Activated CD4-positive, alpha-beta memory T cell treated with anti-CD3 and anti-CD28 coated beads for 36 hours (primary cell): ENCODE measurements at regions of chr9 and their contacts with region 1.

Region 1: DNA sequence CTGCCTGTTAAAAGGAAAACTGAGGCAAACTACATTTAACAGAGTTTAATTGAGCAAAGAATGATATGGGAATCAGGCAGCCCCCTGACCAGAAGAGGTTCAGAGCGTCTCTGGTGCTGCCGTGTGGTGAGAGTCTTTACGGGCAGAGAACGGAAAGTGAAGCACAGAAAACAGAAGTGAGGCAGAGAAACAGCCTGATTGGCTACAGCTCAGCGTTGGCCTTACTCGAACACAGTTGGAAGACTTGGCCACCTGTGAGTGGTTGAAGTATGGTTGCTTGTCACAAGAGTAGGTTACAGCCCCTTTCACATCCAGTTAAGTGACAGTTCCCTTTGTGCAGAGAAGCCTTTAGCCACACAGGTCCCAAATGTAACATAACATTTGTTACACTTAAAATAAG is 16.9 kb upstream of the FBP1 start:
- DNase-seq: peak; percentile 66
- H3K4me3 Mint-ChIP-seq: peak overlapping the region; percentile 63
- H3K27ac Mint-ChIP-seq: no peak overlapping the region
- H3K4me1 Mint-ChIP-seq: peaks cover 15% of the 10 kb centered on the region
- H3K27me3 Mint-ChIP-seq: peaks cover 4% of the 10 kb centered on the region

Region 2: GRCh38 chr9:94639061-94639998 is 16.9 kb before region 1 on chr9 and contains the start of gene FBP1:
- CTCF ChIA-PET with region 1: no interaction called
- POLR2A ChIA-PET with region 1: no interaction called
- intact Hi-C with region 1: no loop called
- DNase-seq: peak; percentile 52
- H3K4me3 Mint-ChIP-seq: peak within 1 kb of the TSS; percentile 83
- H3K27ac Mint-ChIP-seq: peak within 1 kb of the TSS; percentile 28
- H3K4me1 Mint-ChIP-seq: peaks cover 18% of the 10 kb centered on the region
- H3K27me3 Mint-ChIP-seq: peaks cover 5% of the 10 kb centered on the region
- total RNA-seq, gene FBP1: 0.62 to 0.68 TPM

Region 3: DNA sequence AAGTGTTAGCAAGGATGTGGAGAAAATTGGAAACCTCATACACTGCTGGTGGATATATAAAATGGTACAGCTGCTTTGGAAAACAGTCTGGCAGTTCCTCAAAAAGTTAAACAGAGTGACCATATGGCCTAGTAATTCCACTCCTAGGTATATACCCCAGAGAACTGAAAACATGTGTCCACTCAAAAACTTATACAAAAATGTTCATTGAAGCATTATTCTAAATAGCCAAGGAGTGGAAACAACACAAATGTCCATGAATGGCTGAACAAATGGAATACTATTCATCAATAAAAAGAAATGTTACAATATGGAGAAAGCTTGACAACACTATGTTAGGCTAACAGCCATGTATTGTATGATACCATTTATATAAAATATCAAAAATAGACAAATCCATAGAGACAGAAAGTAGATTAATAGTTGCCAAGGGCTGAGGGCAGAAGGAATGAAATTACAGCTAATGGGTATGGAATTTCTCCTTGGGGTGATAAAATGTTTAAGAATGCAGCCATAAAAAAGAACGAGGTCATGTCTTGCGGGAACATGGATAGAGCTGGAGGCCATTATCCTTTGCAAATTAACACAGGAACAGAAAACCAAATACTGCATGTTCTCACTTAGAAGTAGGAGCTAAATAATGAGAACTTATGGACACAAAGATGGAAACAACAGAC is 16.7 kb after region 1 on chr9:
- CTCF ChIA-PET with region 1: interaction called, 11 read pairs
- POLR2A ChIA-PET with region 1: no interaction called
- intact Hi-C with region 1: no loop called
- DNase-seq: no peak
- H3K4me3 Mint-ChIP-seq: no peak overlapping the region
- H3K27ac Mint-ChIP-seq: no peak overlapping the region
- H3K4me1 Mint-ChIP-seq: peaks cover 7% of the 10 kb centered on the region
- H3K27me3 Mint-ChIP-seq: peaks cover 5% of the 10 kb centered on the region